ENCODE measurements at regions of chr1 and their contacts with region 1.

Region 1: DNA sequence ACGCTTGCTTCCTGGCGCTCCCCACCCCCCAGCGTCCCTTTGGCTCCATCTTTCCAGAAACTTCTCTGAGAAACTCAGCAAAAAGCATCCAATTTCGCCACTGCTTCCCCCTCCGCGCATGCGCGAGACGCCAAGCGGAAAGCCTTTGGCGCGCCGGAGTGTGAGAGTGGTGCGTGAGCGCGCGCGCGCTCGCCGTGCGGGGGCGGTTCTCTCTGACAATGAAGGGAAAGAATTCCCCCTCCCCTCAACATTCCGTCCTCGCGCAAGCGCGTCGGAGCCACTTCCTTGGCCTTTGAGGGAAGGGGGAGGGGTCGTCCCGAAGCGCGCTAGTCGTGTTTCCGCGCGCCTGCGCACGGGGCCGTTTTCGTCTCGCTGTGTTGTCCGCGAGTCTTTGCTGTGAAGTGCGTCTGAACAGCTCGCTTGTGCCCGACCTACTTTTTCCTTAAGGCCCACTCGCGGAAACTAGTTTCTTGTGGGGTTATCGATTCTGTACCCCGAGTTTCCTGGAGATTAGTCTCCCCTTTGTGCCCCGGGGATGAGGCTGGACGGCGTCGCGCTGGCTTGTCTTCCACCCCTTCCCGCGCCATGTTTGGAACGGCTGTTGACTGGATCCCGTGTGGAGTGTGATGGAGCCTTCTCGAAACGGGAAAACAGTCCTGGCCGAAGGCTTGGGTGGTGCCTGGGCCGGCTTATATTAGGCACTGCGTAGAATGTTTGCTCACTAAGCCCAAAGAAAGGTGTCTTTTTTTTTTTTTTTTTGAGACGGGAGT is 11.6 kb upstream of the SPEN start:
- DNase-seq: peak; percentile 97 to 99 (median 99)
- H3K4me3 ChIP-seq: peak overlapping the region; percentile 86 to 88
- H3K4me3 Mint-ChIP-seq: peak overlapping the region; percentile 92 to 98 (median 96)
- H3K27ac ChIP-seq: peak overlapping the region; percentile 99
- H3K27ac Mint-ChIP-seq: peak overlapping the region; percentile 98 to 100 (median 99)
- H3K4me1 ChIP-seq: peaks cover 16% of the 10 kb centered on the region
- H3K4me1 Mint-ChIP-seq: peaks cover 8 to 47% (median 14%) of the 10 kb centered on the region in 4 donors
- H3K27me3 ChIP-seq: no peaks in the 10 kb centered on the region
- H3K27me3 Mint-ChIP-seq: no peaks in the 10 kb centered on the region

Region 2: DNA sequence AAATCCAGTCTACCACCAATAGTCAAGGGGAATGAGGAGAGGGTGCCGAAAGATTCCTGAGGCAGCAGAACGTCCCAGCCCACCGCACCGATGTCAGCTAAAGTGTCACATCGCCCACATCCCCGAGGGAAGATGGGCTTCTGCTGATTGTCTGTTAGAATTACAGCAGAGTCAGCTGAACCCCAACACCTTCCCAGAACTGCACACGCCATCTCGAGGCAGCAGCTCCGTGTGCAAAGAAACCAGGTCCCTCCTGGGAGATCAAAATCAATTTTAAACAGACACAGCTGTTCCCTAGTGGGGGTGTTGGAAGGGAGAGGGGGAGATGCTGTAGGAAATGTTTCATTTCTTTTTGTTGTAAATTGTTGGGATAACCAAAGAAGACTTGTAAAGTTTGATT is 1250.2 kb before region 1 on chr1:
- CTCF ChIA-PET with region 1: no interaction called
- POLR2A ChIA-PET with region 1: no interaction called
- intact Hi-C with region 1: no loop called
- DNase-seq: no peak
- H3K4me3 ChIP-seq: no peak overlapping the region
- H3K4me3 Mint-ChIP-seq: no peak overlapping the region
- H3K27ac ChIP-seq: no peak overlapping the region
- H3K27ac Mint-ChIP-seq: no peak overlapping the region
- H3K4me1 ChIP-seq: no peaks in the 10 kb centered on the region
- H3K4me1 Mint-ChIP-seq: no peaks in the 10 kb centered on the region
- H3K27me3 ChIP-seq: no peaks in the 10 kb centered on the region
- H3K27me3 Mint-ChIP-seq: peaks cover 1 to 5% of the 10 kb centered on the region in 2 donors

Region 3: DNA sequence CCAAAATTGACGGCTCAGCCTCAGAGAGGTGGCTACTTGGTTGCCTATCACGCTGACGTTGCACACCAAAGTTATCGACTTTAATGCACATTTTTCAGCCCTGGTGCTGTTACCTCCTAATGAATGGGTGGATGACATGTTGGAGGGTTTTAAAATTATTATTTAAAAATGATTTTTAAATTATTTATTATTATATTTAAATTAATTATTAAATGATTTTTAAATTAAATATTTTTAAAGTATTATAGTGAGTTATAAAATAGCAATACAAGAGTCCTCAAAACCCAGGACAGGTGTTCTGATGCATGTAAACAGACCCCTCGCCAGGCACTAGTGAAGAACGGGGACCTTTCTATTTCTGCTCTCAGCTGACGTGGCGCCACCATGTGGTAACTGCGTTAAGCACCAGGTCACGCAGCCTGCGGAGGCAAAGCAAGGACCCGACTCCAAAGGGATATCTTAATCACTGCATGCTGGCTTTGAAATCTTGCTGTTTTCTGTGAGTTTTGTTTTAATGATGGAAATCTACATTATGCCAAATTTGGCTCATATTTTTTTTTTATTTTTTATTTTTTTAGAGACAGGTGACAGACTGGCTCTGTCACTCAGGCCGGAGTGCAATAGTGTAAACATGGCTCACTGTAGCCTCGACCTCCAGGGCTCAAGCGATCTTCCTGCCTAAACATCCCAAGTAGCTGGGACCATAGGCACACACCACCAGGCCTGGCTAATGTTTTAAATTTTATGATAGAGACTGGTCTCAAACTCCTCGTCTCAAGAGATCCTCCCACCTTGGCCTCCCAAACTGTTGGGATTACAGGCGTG is 334.5 kb before region 1 on chr1:
- CTCF ChIA-PET with region 1: no interaction called
- POLR2A ChIA-PET with region 1: no interaction called
- intact Hi-C with region 1: no loop called
- DNase-seq: peak in 4 of 5 donors; percentile 12 to 32 (median 20)
- H3K4me3 ChIP-seq: no peak overlapping the region
- H3K4me3 Mint-ChIP-seq: no peak overlapping the region
- H3K27ac ChIP-seq: no peak overlapping the region
- H3K27ac Mint-ChIP-seq: no peak overlapping the region
- H3K4me1 ChIP-seq: no peaks in the 10 kb centered on the region
- H3K4me1 Mint-ChIP-seq: no peaks in the 10 kb centered on the region
- H3K27me3 ChIP-seq: no peaks in the 10 kb centered on the region
- H3K27me3 Mint-ChIP-seq: no peaks in the 10 kb centered on the region

Region 4: GRCh38 chr1:15617175-15617880 is 218.6 kb before region 1 on chr1 and contains the start of gene DDI2:
- CTCF ChIA-PET with region 1: no interaction called
- POLR2A ChIA-PET with region 1: no interaction called
- intact Hi-C with region 1: loop called (anchors 10 kb)
- DNase-seq: peak; percentile 91 to 97 (median 93)
- H3K4me3 ChIP-seq: peak within 1 kb of the TSS; percentile 68 to 93
- H3K4me3 Mint-ChIP-seq: peak within 1 kb of the TSS; percentile 92 to 94 (median 93)
- H3K27ac ChIP-seq: peak within 1 kb of the TSS; percentile 86
- H3K27ac Mint-ChIP-seq: peak within 1 kb of the TSS; percentile 76 to 98 (median 96)
- H3K4me1 ChIP-seq: peaks cover 50% of the 10 kb centered on the region
- H3K4me1 Mint-ChIP-seq: peaks cover 27 to 55% (median 41%) of the 10 kb centered on the region in 4 donors
- H3K27me3 ChIP-seq: no peaks in the 10 kb centered on the region
- H3K27me3 Mint-ChIP-seq: no peaks in the 10 kb centered on the region
- total RNA-seq, gene DDI2: 46.2 to 47.6 TPM

Region 5: DNA sequence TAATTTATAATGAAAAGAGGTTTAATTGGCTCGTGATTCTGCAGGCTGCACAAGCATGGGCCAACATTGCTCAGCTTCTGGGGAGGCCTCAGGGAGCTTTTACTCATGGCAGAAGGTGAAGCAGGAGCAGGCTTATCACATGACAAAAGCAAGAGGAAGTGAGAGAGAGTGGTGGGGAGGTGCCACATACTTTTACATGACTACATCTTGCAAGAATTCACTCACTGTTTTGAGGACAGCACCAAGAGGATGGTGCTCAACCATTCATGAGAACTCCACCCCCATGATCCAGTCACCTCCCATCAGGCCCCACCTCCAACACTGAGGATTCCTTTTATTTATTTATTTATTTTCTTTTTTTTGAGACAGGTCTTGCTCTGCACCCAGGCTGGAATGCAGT is 157.3 kb before region 1 on chr1:
- CTCF ChIA-PET with region 1: no interaction called
- POLR2A ChIA-PET with region 1: no interaction called
- intact Hi-C with region 1: no loop called
- DNase-seq: no peak
- H3K4me3 ChIP-seq: no peak overlapping the region
- H3K4me3 Mint-ChIP-seq: no peak overlapping the region
- H3K27ac ChIP-seq: no peak overlapping the region
- H3K27ac Mint-ChIP-seq: peak overlapping the region in 1 of 7 donors; percentile 41
- H3K4me1 ChIP-seq: peaks cover 3% of the 10 kb centered on the region
- H3K4me1 Mint-ChIP-seq: peaks cover 2 to 6% (median 3%) of the 10 kb centered on the region in 4 donors
- H3K27me3 ChIP-seq: no peaks in the 10 kb centered on the region
- H3K27me3 Mint-ChIP-seq: no peaks in the 10 kb centered on the region

Region 6: GRCh38 chr1:15847100-15847892 is 11.4 kb after region 1 on chr1 and contains the start of gene SPEN:
- CTCF ChIA-PET with region 1: interaction called, 18 read pairs
- POLR2A ChIA-PET with region 1: interaction called, 510 read pairs
- intact Hi-C with region 1: loop called (anchors 1 kb)
- DNase-seq: peak; percentile 98 to 99 (median 99)
- H3K4me3 ChIP-seq: peak within 1 kb of the TSS; percentile 62 to 65
- H3K4me3 Mint-ChIP-seq: peak within 1 kb of the TSS; percentile 95 to 99 (median 98)
- H3K27ac ChIP-seq: peak within 1 kb of the TSS; percentile 86
- H3K27ac Mint-ChIP-seq: peak within 1 kb of the TSS; percentile 97 to 99 (median 98)
- H3K4me1 ChIP-seq: peaks cover 52% of the 10 kb centered on the region
- H3K4me1 Mint-ChIP-seq: peaks cover 23 to 60% (median 35%) of the 10 kb centered on the region in 4 donors
- H3K27me3 ChIP-seq: no peaks in the 10 kb centered on the region
- H3K27me3 Mint-ChIP-seq: no peaks in the 10 kb centered on the region
- total RNA-seq, gene SPEN: 80.8 to 87.8 TPM

Region 7: DNA sequence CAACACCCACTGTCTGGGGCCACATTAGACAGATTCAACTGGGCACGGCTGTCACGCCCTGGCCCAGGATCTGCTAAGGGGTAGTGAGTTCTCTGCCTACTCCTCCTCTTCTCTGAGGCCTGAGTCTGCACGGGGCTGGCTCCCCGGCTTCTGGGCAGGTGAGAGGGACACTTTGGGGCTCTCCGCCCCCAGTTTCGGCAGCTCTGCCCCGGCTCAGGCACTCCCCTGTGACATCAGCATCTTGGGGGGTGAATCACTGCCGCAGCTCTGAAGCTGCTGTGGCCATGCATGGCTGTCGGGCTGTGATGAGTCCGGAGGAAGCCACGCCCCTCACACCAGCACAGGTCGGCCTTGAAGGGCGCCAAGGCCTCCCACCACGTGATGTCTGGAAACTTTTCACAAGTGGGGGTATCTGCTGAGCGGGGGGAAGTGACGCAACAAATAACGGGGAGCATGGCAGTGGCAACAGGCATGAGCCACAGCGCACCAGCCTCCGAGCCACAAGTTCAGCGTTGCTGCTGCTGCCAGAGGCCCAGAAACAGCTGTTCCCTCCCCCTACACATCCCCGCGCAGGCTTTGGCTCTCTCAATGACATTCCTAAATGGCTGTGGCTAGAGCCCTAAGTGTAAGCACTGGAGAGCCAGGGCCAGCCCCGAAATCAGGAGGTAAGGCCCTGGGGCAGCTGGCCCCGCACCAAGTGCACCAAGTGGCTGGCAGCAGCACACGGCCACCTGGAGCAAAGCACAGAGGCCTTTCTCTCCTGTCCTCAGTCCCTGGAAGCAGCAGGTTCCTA is 113.7 kb after region 1 on chr1:
- CTCF ChIA-PET with region 1: no interaction called
- POLR2A ChIA-PET with region 1: interaction called, 11 read pairs
- intact Hi-C with region 1: no loop called
- DNase-seq: peak; percentile 82 to 99 (median 84)
- H3K4me3 ChIP-seq: peak overlapping the region in 1 of 2 donors; percentile 18
- H3K4me3 Mint-ChIP-seq: peak overlapping the region; percentile 75 to 91 (median 82)
- H3K27ac ChIP-seq: peak overlapping the region; percentile 79
- H3K27ac Mint-ChIP-seq: peak overlapping the region; percentile 86 to 98 (median 95)
- H3K4me1 ChIP-seq: peaks cover 68% of the 10 kb centered on the region
- H3K4me1 Mint-ChIP-seq: peaks cover 50 to 81% (median 63%) of the 10 kb centered on the region in 4 donors
- H3K27me3 ChIP-seq: no peaks in the 10 kb centered on the region
- H3K27me3 Mint-ChIP-seq: peaks cover 0 to 2% of the 10 kb centered on the region in 2 donors

Region 8: GRCh38 chr1:15975805-15976680 is 140.1 kb after region 1 on chr1 and contains the start of gene ZBTB17:
- CTCF ChIA-PET with region 1: interaction called, 5 read pairs
- POLR2A ChIA-PET with region 1: interaction called, 13 read pairs
- intact Hi-C with region 1: loop called (anchors 1 kb)
- DNase-seq: peak; percentile 94 to 96 (median 95)
- H3K4me3 ChIP-seq: peak within 1 kb of the TSS; percentile 43 to 83
- H3K4me3 Mint-ChIP-seq: peak within 1 kb of the TSS; percentile 87 to 97 (median 89)
- H3K27ac ChIP-seq: peak within 1 kb of the TSS; percentile 70
- H3K27ac Mint-ChIP-seq: peak within 1 kb of the TSS; percentile 88 to 96 (median 94)
- H3K4me1 ChIP-seq: peaks cover 25% of the 10 kb centered on the region
- H3K4me1 Mint-ChIP-seq: peaks cover 22 to 43% (median 32%) of the 10 kb centered on the region in 4 donors
- H3K27me3 ChIP-seq: no peaks in the 10 kb centered on the region
- H3K27me3 Mint-ChIP-seq: no peaks in the 10 kb centered on the region
- total RNA-seq, gene ZBTB17: 52.6 to 61.0 TPM

Region 9: GRCh38 chr1:16904560-16905111 is 1068.7 kb after region 1 on chr1:
- CTCF ChIA-PET with region 1: no interaction called
- POLR2A ChIA-PET with region 1: interaction called, 9 read pairs
- intact Hi-C with region 1: loop called (anchors 10 kb)
- DNase-seq: peak; percentile 99 to 100 (median 100)
- H3K4me3 ChIP-seq: peak overlapping the region; percentile 38 to 66
- H3K4me3 Mint-ChIP-seq: no peak overlapping the region
- H3K27ac ChIP-seq: peak overlapping the region; percentile 97
- H3K27ac Mint-ChIP-seq: no peak overlapping the region
- H3K4me1 ChIP-seq: peaks cover 35% of the 10 kb centered on the region
- H3K4me1 Mint-ChIP-seq: peaks cover 12 to 39% (median 21%) of the 10 kb centered on the region in 4 donors
- H3K27me3 ChIP-seq: no peaks in the 10 kb centered on the region
- H3K27me3 Mint-ChIP-seq: no peaks in the 10 kb centered on the region

Measured in CD4-positive, alpha-beta memory T cell (primary cell).